Mammary epithelial cell (primary cell): ENCODE measurements at regions of chr15 and their contacts with region 1.

Region 1: DNA sequence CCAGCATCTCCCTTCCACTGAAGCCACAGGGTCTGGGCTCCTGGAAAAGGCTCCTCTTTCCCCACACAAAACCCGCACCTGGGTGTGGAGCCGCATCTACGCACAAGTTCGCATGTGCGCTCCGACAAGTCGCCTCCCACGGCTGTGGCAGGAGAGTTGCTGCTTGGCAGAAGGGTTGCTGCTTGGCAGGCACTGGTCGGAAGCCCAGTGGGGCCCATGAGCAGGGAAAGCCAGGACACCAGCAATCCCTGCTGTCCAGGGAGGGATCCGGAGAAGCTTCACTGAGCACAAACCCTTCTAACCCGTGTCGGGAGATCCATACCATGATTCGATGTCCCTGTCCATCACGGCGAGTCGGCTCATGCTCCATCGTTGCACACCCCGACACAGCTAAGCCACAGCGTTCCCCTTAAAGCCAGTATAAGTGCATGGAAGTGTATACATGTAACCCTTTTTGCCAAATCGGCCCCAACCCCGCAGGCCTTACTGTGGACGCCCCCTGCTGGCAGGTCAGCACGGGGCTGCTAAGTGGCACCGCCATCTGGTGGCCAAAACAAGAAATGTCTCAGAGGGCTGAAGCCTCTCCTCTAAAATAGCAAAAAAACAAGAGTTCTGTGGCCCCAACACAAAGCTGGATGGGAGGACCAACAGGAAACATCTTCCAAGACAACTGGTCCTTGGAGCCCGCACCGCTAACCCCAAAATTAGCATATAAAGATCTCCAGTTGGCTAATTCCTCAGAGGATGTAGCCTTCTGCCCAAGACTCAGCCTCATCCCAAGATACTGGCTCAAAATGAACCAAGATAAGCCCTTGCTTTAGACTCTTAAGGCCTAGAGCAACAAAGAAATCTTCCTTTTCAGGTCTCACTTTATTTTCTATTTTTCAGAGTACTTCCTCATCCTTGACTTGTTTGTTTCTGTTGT is 8.3 kb downstream of the ANKRD63 start:
- DNase-seq: peak; percentile 60
- H3K4me3 ChIP-seq: no peak overlapping the region
- H3K27ac ChIP-seq: no peak overlapping the region
- H3K4me1 ChIP-seq: no peaks in the 10 kb centered on the region
- H3K27me3 ChIP-seq: no peaks in the 10 kb centered on the region
- CTCF ChIP-seq: peak; percentile 100

Region 2: GRCh38 chr15:40044717-40045571 is 229.7 kb before region 1 on chr15:
- CTCF ChIA-PET with region 1: interaction called, 3 read pairs
- dilution Hi-C with region 1: loop called (anchors 5 kb)
- in situ Hi-C with region 1: loop called in 1 of 2 experiments (anchors 5 kb)
- intact Hi-C with region 1: loop called (anchors 1 kb)
- DNase-seq: peak; percentile 75
- H3K4me3 ChIP-seq: peak overlapping the region in 1 of 3 experiments; percentile 3
- H3K27ac ChIP-seq: peak overlapping the region; percentile 23
- H3K4me1 ChIP-seq: peaks cover 35% of the 10 kb centered on the region
- H3K27me3 ChIP-seq: no peaks in the 10 kb centered on the region
- CTCF ChIP-seq: peak; percentile 84 to 94

Region 3: GRCh38 chr15:40217159-40217824 is 57.3 kb before region 1 on chr15:
- CTCF ChIA-PET with region 1: interaction called, 13 read pairs
- dilution Hi-C with region 1: loop called (anchors 5 kb)
- in situ Hi-C with region 1: loop called (anchors 5 kb)
- intact Hi-C with region 1: loop called (anchors 1 kb)
- DNase-seq: peak; percentile 48
- H3K4me3 ChIP-seq: no peak overlapping the region
- H3K27ac ChIP-seq: no peak overlapping the region
- H3K4me1 ChIP-seq: no peaks in the 10 kb centered on the region
- H3K27me3 ChIP-seq: no peaks in the 10 kb centered on the region
- CTCF ChIP-seq: peak; percentile 79 to 81

Region 4: DNA sequence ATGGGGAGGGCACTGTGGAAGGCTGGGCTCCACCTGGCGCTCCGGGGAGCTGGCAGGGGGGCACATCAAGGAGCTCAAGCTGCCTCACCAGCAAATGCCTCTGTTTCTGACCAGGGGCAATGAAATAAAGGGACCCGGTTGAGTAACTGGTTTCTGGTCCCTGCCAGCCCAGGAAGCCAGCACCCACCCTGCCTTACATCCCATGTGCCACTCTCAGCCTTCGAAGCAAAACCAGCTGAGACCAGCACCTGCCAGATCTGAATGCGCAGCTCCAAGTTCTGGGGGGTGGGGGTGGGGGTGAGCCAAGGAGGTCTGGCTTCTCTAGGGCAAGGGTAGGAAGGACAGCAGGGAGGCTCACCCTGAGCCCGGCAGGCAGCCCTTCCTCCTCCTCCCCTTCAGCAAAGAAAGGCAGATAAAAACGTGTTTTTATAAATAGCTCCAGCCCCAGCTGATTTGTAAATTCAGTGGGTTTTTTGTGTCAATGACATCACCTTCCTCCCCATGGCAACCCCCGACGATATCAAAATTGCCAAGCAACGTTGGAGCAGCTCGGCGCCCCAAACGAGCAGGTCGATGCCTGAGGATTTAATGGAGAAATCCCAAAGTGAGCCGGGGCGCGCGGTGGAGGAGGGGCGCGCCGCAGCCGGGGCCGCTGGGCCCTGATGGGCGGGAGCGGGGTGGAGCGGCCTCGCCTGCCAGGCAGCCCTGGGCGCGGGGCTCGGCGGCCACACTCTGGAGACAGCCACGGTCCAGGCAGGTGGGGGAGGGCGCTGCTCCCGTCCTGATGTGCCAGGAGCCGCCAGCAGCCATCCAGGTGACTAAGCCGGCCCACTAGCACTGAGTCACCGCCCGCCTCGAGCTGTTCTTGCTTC is 35.8 kb before region 1 on chr15 and contains the start of gene PAK6:
- CTCF ChIA-PET with region 1: interaction called, 7 read pairs
- dilution Hi-C with region 1: no loop called
- in situ Hi-C with region 1: no loop called
- intact Hi-C with region 1: loop called (anchors 1 kb)
- DNase-seq: peak; percentile 95
- H3K4me3 ChIP-seq: peak within 1 kb of the TSS; percentile 23 to 73 (median 61)
- H3K27ac ChIP-seq: peak within 1 kb of the TSS; percentile 75
- H3K4me1 ChIP-seq: peaks cover 73% of the 10 kb centered on the region
- H3K27me3 ChIP-seq: no peaks in the 10 kb centered on the region
- CTCF ChIP-seq: no peak
- total RNA-seq, gene PAK6: 13.7 to 33.8 TPM

Region 5: DNA sequence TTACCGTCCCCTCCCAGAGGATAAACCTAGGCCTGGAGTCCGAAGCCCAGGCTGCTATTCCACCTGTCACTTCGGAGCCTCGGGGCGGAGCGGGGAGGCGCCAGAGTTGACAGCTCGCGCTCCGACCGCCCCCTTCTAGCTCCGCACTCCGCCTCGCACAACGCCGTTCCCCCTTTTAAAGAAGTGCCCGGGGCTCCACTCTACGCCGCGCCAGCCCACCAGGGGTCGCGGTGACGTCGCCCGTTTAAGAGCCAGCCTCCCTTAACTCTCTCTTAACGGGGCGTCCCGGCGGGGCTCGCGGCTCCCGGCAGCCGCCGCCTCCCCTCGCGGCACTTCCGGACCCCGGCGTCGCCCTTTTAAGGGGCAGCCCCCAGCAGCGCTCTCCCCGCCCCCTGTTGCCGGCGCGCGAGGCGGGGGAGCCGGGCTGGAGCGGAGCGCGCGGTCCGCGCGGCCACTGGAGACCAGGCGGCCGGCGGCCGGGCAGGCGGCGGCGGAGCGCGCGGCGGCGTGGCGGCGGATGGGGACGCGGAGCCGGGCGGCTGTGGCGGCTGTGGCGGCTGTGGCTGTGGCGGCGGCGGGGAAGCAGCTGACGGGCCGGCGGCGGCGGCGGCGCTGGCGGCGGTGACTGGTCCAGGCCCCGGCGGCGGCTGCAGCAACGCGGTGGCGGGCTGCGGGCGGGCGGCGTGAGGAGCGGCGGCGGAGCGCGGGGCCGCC is 48.8 kb after region 1 on chr15 and contains the start of gene INAFM2:
- CTCF ChIA-PET with region 1: no interaction called
- dilution Hi-C with region 1: no loop called
- in situ Hi-C with region 1: loop called in 1 of 2 experiments (anchors 5 kb)
- intact Hi-C with region 1: no loop called
- DNase-seq: peak; percentile 90
- H3K4me3 ChIP-seq: peak within 1 kb of the TSS; percentile 61 to 77 (median 64)
- H3K27ac ChIP-seq: no peak within 1 kb of the TSS
- H3K4me1 ChIP-seq: peaks cover 46% of the 10 kb centered on the region
- H3K27me3 ChIP-seq: no peaks in the 10 kb centered on the region
- CTCF ChIP-seq: peak; percentile 6 to 34
- total RNA-seq, gene INAFM2: 25.5 to 28.0 TPM

Region 6: GRCh38 chr15:40367686-40368611 is 93.3 kb after region 1 on chr15:
- CTCF ChIA-PET with region 1: no interaction called
- dilution Hi-C with region 1: no loop called
- in situ Hi-C with region 1: no loop called
- intact Hi-C with region 1: loop called (anchors 1 kb)
- DNase-seq: peak; percentile 88
- H3K4me3 ChIP-seq: no peak overlapping the region
- H3K27ac ChIP-seq: no peak overlapping the region
- H3K4me1 ChIP-seq: peaks cover 19% of the 10 kb centered on the region
- H3K27me3 ChIP-seq: no peaks in the 10 kb centered on the region
- CTCF ChIP-seq: peak; percentile 60 to 64

Region 7: DNA sequence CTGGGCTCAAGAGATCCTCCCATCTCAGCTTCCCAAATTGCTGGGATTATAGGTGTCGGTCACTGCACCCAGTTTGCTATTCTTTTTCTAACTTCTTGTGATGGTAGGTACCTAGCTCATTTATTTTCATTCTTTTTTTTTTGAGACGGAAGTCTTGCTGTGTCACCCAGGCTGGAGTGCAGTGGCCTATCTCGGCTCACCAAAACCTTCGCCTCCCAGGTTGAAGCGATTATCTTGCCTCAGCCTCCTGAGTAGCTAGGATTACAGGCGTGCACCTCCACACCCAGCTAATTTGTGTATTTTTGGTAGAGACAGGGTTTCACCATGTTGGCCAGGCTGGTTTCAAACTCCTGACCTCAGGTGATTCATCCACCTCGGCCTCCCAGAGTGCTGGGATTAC is 390.3 kb after region 1 on chr15:
- CTCF ChIA-PET with region 1: no interaction called
- dilution Hi-C with region 1: no loop called
- in situ Hi-C with region 1: no loop called
- intact Hi-C with region 1: no loop called
- DNase-seq: no peak
- H3K4me3 ChIP-seq: no peak overlapping the region
- H3K27ac ChIP-seq: no peak overlapping the region
- H3K4me1 ChIP-seq: no peaks in the 10 kb centered on the region
- H3K27me3 ChIP-seq: no peaks in the 10 kb centered on the region
- CTCF ChIP-seq: no peak